ENCODE measurements at regions of chr10 and their contacts with region 1.

Region 1: GRCh38 chr10:48656241-48656913 is 28.3 kb upstream of the WDFY4 start:
- DNase-seq: peak; percentile 87
- H3K4me3 Mint-ChIP-seq: peak overlapping the region; percentile 70
- H3K27ac Mint-ChIP-seq: no peak overlapping the region
- H3K4me1 Mint-ChIP-seq: peaks cover 3% of the 10 kb centered on the region
- H3K27me3 Mint-ChIP-seq: peaks cover 31% of the 10 kb centered on the region

Region 2: DNA sequence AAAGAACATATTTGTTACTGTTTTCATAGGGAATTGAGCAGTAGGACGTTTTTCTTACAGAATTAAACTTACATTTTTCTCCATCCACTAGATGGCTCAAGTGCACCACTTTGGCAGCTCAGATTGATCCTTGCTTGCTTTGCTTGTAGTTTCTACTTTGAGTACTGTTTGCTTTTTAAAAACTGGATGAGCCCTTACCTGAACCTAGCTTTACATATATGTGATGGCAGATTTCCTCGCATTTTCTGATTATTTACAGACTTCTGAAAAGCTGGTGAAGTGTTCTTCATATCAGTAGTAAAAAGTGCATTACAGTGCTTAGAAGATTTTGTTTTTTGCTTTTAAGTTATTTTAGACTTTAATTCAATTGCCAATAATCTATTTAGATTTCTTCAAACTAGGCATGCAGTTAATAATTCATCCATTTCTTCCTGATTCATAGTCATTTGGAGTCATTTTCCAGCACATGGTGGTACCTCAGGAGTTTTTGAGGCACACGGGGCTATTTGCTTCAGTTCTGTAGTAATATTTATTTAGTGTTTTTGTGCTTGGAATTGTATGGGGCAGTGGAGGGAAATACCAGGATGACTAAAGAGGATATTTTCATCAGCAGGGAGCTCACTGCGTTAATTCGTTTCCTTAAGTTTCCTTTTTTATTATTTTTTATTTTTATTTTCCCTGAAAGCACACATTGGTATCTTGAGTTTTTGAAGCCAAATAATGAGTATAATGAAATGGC is 292.6 kb before region 1 on chr10:
- intact Hi-C with region 1: loop called (anchors 1 kb)
- DNase-seq: no peak
- H3K4me3 Mint-ChIP-seq: no peak overlapping the region
- H3K27ac Mint-ChIP-seq: no peak overlapping the region
- H3K4me1 Mint-ChIP-seq: peaks cover 11% of the 10 kb centered on the region
- H3K27me3 Mint-ChIP-seq: no peaks in the 10 kb centered on the region

Region 3: GRCh38 chr10:48444266-48444665 is 212.1 kb before region 1 on chr10:
- intact Hi-C with region 1: no loop called
- DNase-seq: no peak
- H3K4me3 Mint-ChIP-seq: no peak overlapping the region
- H3K27ac Mint-ChIP-seq: no peak overlapping the region
- H3K4me1 Mint-ChIP-seq: no peaks in the 10 kb centered on the region
- H3K27me3 Mint-ChIP-seq: no peaks in the 10 kb centered on the region

Region 4: DNA sequence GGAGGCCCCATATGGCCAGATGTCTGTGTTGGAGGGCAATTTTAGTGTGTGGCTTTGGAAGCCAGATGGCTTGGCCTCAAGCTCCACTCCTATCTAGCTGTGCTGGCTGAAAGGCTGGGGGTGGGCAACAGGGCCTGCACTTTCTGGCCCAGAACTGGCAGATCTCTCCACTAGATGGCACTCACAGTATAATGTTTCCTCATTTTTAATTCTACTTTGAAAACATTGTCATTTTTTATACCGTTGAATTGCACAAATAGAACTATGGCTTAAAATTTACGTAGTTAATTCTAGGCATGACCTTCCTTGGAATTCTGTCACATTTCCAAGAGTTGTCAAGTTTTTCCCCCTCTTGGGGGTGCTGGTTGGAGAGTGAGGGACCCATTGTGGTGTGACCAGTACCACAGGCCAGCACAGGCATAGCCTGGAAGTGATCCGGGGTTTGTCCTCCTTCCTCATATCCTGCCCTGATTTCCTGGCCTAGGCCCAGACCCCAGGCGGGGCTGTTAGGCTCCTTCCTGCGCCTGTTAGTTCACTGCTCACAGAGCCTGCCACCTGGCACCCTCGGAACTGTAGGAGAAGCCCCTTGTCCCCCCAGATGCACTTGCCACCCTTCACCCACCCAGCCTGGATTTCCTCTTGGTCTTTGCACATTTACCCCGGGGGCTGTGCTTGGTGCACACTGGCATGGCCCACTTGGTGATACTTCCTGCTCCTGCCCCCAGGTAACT is 104.4 kb before region 1 on chr10:
- intact Hi-C with region 1: loop called (anchors 1 kb)
- DNase-seq: no peak
- H3K4me3 Mint-ChIP-seq: no peak overlapping the region
- H3K27ac Mint-ChIP-seq: no peak overlapping the region
- H3K4me1 Mint-ChIP-seq: no peaks in the 10 kb centered on the region
- H3K27me3 Mint-ChIP-seq: no peaks in the 10 kb centered on the region

Region 5: GRCh38 chr10:48608279-48608681 is 48.1 kb before region 1 on chr10:
- intact Hi-C with region 1: loop called (anchors 5 kb)
- DNase-seq: no peak
- H3K4me3 Mint-ChIP-seq: no peak overlapping the region
- H3K27ac Mint-ChIP-seq: no peak overlapping the region
- H3K4me1 Mint-ChIP-seq: no peaks in the 10 kb centered on the region
- H3K27me3 Mint-ChIP-seq: peaks cover 25% of the 10 kb centered on the region

Region 6: GRCh38 chr10:48802611-48803071 is 146.3 kb after region 1 on chr10:
- intact Hi-C with region 1: loop called (anchors 5 kb)
- DNase-seq: no peak
- H3K4me3 Mint-ChIP-seq: no peak overlapping the region
- H3K27ac Mint-ChIP-seq: no peak overlapping the region
- H3K4me1 Mint-ChIP-seq: peaks cover 49% of the 10 kb centered on the region
- H3K27me3 Mint-ChIP-seq: no peaks in the 10 kb centered on the region

Region 7: DNA sequence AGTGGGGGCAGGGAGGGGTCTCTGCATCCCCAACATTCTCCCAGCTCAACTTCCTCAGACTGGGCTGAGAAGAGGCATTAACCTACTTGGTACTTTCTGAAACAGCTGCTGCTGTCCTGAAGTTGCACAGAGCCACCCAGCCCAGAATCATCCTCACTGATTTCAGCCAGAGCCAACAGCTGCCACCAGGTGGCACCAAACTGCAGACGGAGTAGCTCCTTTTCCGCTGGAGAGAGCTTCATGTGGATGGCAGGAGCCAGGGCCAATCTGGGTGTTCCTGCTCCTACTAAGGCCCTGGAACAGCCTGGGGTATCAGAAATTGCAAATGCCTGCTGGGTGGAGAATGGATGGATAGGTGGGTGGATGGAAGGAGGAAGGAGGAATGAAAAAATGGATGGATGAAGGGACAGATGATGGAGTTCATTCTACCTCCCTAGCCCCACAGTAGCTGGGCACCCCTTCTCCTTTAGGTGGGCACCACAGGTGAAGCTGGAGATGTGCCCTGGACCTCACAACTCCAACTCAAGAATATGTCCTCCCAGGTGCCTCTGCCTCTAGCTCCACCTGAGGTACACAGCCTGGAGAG is 751.3 kb after region 1 on chr10:
- intact Hi-C with region 1: loop called (anchors 10 kb)
- DNase-seq: peak; percentile 51
- H3K4me3 Mint-ChIP-seq: no peak overlapping the region
- H3K27ac Mint-ChIP-seq: no peak overlapping the region
- H3K4me1 Mint-ChIP-seq: peaks cover 1% of the 10 kb centered on the region
- H3K27me3 Mint-ChIP-seq: peaks cover 22% of the 10 kb centered on the region

Region 8: DNA sequence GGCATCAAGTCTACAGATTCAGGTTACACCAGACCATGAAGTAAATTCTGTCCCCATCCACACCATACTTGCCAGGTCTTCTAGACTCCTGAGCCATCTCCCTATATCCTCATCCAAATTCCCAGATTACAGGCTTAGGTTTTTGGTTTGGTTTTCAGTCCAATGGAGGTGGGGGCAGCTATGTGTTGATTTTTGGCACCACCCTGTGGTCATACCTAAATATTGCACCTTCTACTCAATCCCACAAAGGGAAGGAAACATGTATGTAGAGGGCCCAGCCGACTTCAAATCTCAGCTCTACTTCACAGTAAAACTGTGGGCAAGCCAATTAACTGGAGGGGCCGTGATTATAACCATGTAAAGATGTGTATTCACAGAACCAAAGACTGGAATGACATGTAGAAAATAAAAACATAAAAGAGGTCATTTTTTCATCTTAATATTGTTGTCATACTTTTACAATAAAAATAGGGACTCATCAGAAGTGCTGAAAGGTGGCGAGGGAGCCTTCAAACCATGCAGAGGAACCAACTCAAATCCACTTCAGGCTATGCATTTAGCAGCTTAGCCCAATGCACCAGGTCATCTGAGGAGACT is 862.7 kb after region 1 on chr10:
- intact Hi-C with region 1: loop called (anchors 2 kb)
- DNase-seq: no peak
- H3K4me3 Mint-ChIP-seq: no peak overlapping the region
- H3K27ac Mint-ChIP-seq: no peak overlapping the region
- H3K4me1 Mint-ChIP-seq: peaks cover 6% of the 10 kb centered on the region
- H3K27me3 Mint-ChIP-seq: no peaks in the 10 kb centered on the region

Measured in activated T-helper 2 cell treated with anti-CD3 and anti-CD28 coated beads, Interferon-gamma antibody, Interleukin-2, Interleukin-4, amounts not matched to agents 10 μg/mL and 5 μg/mL and 100 μg/mL, durations not matched to agents 14 hours and 24 hours and 36 hours (primary cell).